ENCODE measurements at regions of chr1 and their contacts with region 1.

Region 1: GRCh38 chr1:91500756-91501522 is at the start of gene CDC7:
- DNase-seq: peak; percentile 76 to 91 (median 86)
- H3K4me3 ChIP-seq: peak within 1 kb of the TSS; percentile 40 to 92 (median 76)
- H3K27ac ChIP-seq: peak within 1 kb of the TSS; percentile 40 to 97 (median 91)
- H3K27me3 ChIP-seq: no peaks in the 10 kb centered on the region
- CTCF ChIP-seq: peak in 48 of 56 donors; percentile 3 to 67 (median 48)
- total RNA-seq, gene CDC7: 5.1 to 18.8 (median 12.2) TPM

Region 2: GRCh38 chr1:91282695-91283420 is 218.1 kb before region 1 on chr1:
- intact Hi-C with region 1: loop called in 1 of 2 experiments (anchors 10 kb)
- DNase-seq: peak in 8 of 10 donors; percentile 18 to 70 (median 46)
- H3K4me3 ChIP-seq: peak overlapping the region in 40 of 59 donors; percentile 1 to 56 (median 36)
- H3K27ac ChIP-seq: no peak overlapping the region
- H3K27me3 ChIP-seq: no peaks in the 10 kb centered on the region
- CTCF ChIP-seq: peak; percentile 56 to 95 (median 87)

Region 3: GRCh38 chr1:91404151-91405012 is 96.6 kb before region 1 on chr1 and contains the start of gene HFM1:
- intact Hi-C with region 1: loop called in 1 of 2 experiments (anchors 10 kb)
- DNase-seq: peak; percentile 40 to 87 (median 75)
- H3K4me3 ChIP-seq: peak within 1 kb of the TSS; percentile 38 to 80 (median 67)
- H3K27ac ChIP-seq: peak within 1 kb of the TSS in 57 of 59 donors; percentile 20 to 92 (median 80)
- H3K27me3 ChIP-seq: peaks cover 0 to 39% (median 0%) of the 10 kb centered on the region in 45 donors
- CTCF ChIP-seq: peak in 32 of 56 donors; percentile 7 to 53 (median 31)
- total RNA-seq, gene HFM1: 0.74 to 8.0 (median 3.6) TPM

Region 4: DNA sequence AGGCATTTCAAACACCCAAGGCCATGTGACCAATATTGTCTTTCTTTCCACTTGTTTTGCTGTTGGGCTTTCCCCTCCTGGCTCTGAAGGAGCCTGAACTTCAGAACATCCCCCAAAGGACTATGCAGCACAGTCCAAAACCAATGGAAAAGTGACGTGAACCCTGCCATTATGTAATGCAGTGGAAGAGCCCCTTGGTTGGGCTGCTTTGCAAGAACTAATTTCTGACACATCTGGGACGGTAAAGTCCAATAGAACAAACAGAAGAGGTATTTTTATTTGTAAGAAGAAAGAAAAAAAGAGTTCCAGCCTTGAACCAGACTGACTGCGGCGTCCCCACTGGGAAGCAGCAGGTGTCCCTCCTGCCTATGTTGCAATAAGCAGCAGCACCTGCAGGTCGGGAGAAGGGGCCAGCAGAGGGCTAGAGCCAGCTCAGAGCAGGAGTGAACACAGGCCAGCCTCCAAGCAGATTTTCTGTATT is 116.4 kb after region 1 on chr1:
- intact Hi-C with region 1: no loop called
- DNase-seq: peak in 1 of 10 donors; percentile 69
- H3K4me3 ChIP-seq: no peak overlapping the region
- H3K27ac ChIP-seq: no peak overlapping the region
- H3K27me3 ChIP-seq: peaks cover 0 to 18% (median 0%) of the 10 kb centered on the region in 45 donors
- CTCF ChIP-seq: peak in 7 of 56 donors; percentile 9 to 20 (median 12)

Region 5: DNA sequence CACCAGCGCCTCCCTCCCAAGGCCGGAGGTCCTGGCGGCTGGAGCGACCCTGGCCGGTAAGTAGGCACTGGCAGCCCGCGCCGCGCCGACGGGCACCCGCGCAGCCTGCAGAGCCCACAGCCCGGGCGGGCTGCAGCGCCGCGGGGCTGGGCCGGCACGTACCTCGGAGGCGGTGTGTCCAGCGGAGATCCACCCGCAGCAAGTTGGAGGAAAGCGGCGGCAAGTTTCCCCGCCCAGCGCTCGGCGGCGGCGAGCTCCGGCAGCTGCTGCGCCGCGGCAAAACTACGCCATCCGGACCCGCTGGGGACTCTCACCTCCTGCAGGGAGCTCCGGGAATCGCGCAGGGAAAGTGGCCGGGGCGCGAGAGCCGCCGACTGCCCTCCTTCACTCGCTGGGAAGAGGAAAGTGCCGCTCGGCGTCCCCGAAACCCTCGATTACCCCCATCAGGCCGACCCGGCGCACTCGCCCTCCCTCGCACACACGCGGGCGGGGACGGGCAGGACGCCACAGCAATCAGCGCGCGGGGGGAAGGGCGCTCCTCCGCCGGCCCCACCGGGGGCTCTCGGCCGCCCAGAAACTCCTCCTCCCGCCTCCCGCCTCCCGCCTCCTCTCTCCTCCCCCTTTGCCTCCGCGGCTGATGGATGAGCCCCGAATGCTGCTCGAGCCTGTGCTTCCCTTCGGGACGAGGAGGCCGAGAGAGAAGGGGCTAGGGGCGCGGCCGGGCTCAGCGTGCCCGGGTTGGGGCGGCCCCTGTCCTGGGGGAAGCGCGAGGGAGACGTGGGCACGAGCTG is 385.0 kb after region 1 on chr1 and contains the start of gene TGFBR3:
- intact Hi-C with region 1: loop called (anchors 5 to 10 kb)
- DNase-seq: peak; percentile 67 to 89 (median 78)
- H3K4me3 ChIP-seq: peak within 1 kb of the TSS; percentile 62 to 95 (median 82)
- H3K27ac ChIP-seq: peak within 1 kb of the TSS in 58 of 59 donors; percentile 10 to 93 (median 82)
- H3K27me3 ChIP-seq: no peaks in the 10 kb centered on the region
- CTCF ChIP-seq: peak in 49 of 56 donors; percentile 6 to 64 (median 38)
- total RNA-seq, gene TGFBR3: 7.4 to 40.5 (median 18.3) TPM

Region 6: DNA sequence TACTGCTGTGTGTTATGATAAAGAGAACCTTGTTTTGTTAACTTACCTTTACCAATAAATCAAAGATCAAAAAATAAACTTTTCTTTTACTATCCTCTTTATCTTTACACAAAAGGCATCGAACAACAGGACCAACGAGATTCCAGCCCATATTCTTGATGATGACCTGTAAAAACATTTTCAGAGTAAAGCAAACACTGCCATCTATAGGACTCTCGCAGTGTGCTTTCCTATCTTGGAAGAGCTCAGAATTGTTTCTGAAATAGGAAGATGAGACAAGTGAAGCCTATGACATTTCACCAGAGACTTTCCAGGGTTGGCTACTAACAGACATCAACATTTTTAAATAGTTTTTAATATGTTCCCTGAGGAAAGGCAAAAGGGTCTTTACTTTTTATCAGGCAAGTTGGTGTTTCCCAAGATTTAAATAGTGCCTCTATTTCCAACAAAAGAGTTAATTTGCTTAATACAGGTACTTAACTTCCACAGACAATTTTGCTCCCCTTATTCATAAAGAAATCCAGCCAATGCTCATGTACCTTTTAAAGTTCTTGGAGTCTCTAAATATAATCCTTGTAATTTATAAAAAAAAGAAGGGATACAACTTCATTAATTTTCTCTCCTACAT is 790.5 kb after region 1 on chr1:
- intact Hi-C with region 1: loop called in 1 of 2 experiments (anchors 5 kb)
- DNase-seq: peak in 1 of 10 donors; percentile 16
- H3K4me3 ChIP-seq: no peak overlapping the region
- H3K27ac ChIP-seq: no peak overlapping the region
- H3K27me3 ChIP-seq: no peaks in the 10 kb centered on the region
- CTCF ChIP-seq: peak; percentile 29 to 84 (median 72)

Measured in dorsolateral prefrontal cortex (tissue), 120 donors.